GM13976 (cell line): ENCODE measurements at regions of chr5 and their contacts with region 1.

Region 1: GRCh38 chr5:74640450-74640953 is at the start of gene ENC1:
- DNase-seq: peak; percentile 77
- CTCF ChIP-seq: peak; percentile 32

Region 2: DNA sequence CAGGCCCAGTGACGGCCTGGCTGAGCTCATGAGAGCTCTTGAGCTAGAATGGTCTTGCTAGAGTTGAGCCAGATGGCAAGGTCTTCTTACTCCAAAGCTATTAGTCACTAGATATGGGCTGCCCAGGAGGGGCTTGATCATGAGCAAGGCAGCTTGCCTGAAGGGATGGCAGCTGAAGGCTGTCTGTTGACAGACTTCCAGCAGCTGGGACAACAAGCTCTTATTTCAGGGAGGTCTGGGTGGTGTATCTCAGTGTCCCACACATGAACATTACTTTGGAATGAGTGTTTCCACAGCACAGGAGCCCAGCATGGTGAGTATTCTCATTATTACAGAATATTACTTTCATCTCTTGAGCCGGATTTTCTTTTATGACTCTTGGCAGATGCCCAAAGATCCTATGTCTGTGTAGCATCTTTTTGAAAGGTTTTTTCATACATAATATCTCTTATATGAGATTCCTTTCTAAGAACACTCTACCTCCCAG is 600.4 kb before region 1 on chr5:
- in situ Hi-C with region 1: loop called (anchors 10 kb)
- DNase-seq: no peak
- CTCF ChIP-seq: no peak